ENCODE measurements at regions of chr6 and their contacts with region 1.

Region 1: GRCh38 chr6:75504465-75505228 is 11.0 kb upstream of the FILIP1 start:
- DNase-seq: no peak

Region 2: DNA sequence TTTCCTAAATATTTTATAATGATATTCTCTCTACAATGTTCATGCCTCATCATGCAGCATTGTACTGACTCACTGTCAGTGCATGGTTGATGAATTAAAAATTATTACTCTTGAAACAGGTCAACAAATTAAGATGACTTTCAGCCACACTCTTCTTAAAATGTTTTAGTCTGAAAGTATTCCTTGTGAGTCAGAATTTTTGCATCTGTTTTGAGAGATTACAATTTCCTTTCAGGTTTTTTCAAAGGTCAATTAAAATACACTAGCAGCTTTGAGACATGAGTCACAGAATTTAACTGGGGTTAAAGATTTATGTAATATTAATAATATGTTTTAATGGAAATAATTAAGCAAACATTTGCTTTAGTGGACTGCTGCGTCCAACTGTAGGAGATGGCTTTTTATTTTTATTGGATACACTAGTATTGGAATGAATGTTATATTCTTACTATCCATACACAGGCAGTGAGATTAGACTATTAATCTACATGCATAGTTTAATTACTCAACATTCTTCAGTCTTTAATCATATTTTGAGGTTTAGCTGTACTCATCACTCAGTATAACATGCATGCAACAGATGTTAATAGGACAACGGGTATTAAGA is 308.5 kb before region 1 on chr6:
- intact Hi-C with region 1: no loop called
- DNase-seq: no peak

Region 3: DNA sequence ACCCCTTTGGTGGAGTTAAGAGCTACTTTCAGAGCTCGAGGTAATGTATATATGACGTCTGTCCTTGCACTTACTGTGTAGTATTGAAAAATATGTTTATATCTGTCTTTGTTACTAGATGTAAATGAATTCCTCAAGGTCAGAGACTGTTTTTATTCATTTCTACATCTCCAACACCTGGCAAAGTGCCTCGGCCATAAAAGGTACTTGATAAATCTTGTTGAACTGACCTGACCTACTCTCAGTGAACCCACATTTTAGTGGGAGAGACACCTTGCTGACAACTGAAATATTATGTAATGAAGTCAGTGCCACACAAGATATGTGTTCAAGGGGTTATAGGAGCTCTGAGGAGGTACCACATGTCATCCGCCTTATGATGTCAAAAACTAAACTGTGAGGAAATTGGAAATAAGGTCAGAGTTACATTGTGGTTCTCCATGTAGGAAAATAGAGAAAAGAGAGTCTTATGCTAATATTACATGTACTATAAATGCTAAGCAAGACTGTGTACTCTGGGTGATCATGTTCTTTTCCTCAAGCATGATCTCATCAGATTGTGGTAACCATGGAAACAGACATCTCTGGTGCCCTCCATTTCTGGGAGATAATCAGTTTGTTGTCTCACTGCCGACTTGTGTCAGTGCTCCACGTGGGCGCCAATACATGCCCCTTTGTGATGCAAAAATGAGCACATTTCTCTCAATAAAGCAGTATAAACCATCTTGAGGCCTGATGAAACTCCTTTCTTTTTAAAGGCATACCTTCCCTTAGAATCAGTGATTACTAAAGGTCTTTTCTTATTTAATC is 214.3 kb before region 1 on chr6:
- intact Hi-C with region 1: loop called in 1 of 2 experiments (anchors 5 kb)
- DNase-seq: no peak

Measured in posterior vena cava (tissue), 2 donors.